Naive thymus-derived CD4-positive, alpha-beta T cell (primary cell): ENCODE measurements at regions of chr1 and their contacts with region 1.

Region 1: DNA sequence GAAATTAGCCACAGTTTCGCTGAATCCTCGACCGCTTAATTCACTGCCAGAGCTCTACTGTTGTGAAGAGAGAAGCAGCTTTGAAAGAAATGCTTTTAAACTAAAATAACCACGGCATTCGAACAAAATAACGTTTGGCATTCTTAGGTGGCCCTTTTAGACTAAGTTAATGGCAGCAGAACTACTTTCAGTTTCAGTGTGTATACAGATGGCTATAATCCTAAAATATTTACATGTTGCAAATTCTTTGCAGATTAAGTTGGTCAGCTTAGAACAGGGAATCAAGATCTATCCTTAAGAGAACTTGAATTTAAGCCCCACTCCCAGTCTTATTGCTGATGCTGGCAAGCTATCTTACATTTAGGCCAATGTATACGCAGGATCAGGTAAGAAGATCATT is 62.7 kb downstream of the ADSS2 start:
- DNase-seq: no peak
- ATAC-seq: no peak
- H3K4me3 ChIP-seq: no peak overlapping the region
- H3K4me3 Mint-ChIP-seq: no peak overlapping the region
- H3K27ac ChIP-seq: no peak overlapping the region
- H3K27ac Mint-ChIP-seq: no peak overlapping the region
- H3K4me1 ChIP-seq: no peaks in the 10 kb centered on the region
- H3K4me1 Mint-ChIP-seq: peaks cover 0 to 3% (median 0%) of the 10 kb centered on the region in 7 donors
- H3K27me3 ChIP-seq: no peaks in the 10 kb centered on the region
- H3K27me3 Mint-ChIP-seq: no peaks in the 10 kb centered on the region

Region 2: GRCh38 chr1:244242446-244242845 is 146.5 kb before region 1 on chr1:
- CTCF ChIA-PET with region 1: no interaction called
- POLR2A ChIA-PET with region 1: no interaction called
- intact Hi-C with region 1: no loop called
- DNase-seq: peak in 5 of 9 donors; percentile 11 to 46 (median 30)
- ATAC-seq: peak; percentile 68
- H3K4me3 ChIP-seq: no peak overlapping the region
- H3K4me3 Mint-ChIP-seq: peak overlapping the region in 2 of 10 donors; percentile 8 to 46
- H3K27ac ChIP-seq: no peak overlapping the region
- H3K27ac Mint-ChIP-seq: peak overlapping the region in 8 of 9 donors; percentile 2 to 80 (median 34)
- H3K4me1 ChIP-seq: peaks cover 0 to 7% of the 10 kb centered on the region in 2 donors
- H3K4me1 Mint-ChIP-seq: peaks cover 13 to 34% (median 31%) of the 10 kb centered on the region in 7 donors
- H3K27me3 ChIP-seq: no peaks in the 10 kb centered on the region
- H3K27me3 Mint-ChIP-seq: peaks cover 0 to 5% (median 0%) of the 10 kb centered on the region in 5 donors

Region 3: GRCh38 chr1:244353551-244354091 is 35.3 kb before region 1 on chr1:
- CTCF ChIA-PET with region 1: no interaction called
- POLR2A ChIA-PET with region 1: no interaction called
- intact Hi-C with region 1: loop called in 1 of 2 experiments (anchors 5 kb)
- DNase-seq: peak in 1 of 9 donors; percentile 49
- ATAC-seq: peak; percentile 88
- H3K4me3 ChIP-seq: no peak overlapping the region
- H3K4me3 Mint-ChIP-seq: no peak overlapping the region
- H3K27ac ChIP-seq: no peak overlapping the region
- H3K27ac Mint-ChIP-seq: no peak overlapping the region
- H3K4me1 ChIP-seq: peaks cover 0 to 4% of the 10 kb centered on the region in 2 donors
- H3K4me1 Mint-ChIP-seq: peaks cover 0 to 27% (median 0%) of the 10 kb centered on the region in 7 donors
- H3K27me3 ChIP-seq: no peaks in the 10 kb centered on the region
- H3K27me3 Mint-ChIP-seq: peaks cover 0 to 14% (median 5%) of the 10 kb centered on the region in 5 donors